ENCODE measurements at regions of chr1 and their contacts with region 1.

Region 1: GRCh38 chr1:153510984-153511410 is 24.8 kb downstream of the S100A6 start:
- DNase-seq: peak; percentile 53 to 89 (median 82)
- ATAC-seq: peak; percentile 90
- H3K4me3 ChIP-seq: no peak overlapping the region
- H3K4me3 Mint-ChIP-seq: no peak overlapping the region
- H3K27ac ChIP-seq: no peak overlapping the region
- H3K27ac Mint-ChIP-seq: no peak overlapping the region
- H3K4me1 ChIP-seq: no peaks in the 10 kb centered on the region
- H3K4me1 Mint-ChIP-seq: no peaks in the 10 kb centered on the region
- H3K27me3 ChIP-seq: no peaks in the 10 kb centered on the region
- H3K27me3 Mint-ChIP-seq: no peaks in the 10 kb centered on the region
- CTCF ChIP-seq: peak; percentile 94

Region 2: GRCh38 chr1:152996633-152997400 is 514.2 kb before region 1 on chr1:
- CTCF ChIA-PET with region 1: no interaction called
- POLR2A ChIA-PET with region 1: no interaction called
- intact Hi-C with region 1: no loop called
- DNase-seq: no peak
- ATAC-seq: no peak
- H3K4me3 ChIP-seq: no peak overlapping the region
- H3K4me3 Mint-ChIP-seq: no peak overlapping the region
- H3K27ac ChIP-seq: no peak overlapping the region
- H3K27ac Mint-ChIP-seq: no peak overlapping the region
- H3K4me1 ChIP-seq: no peaks in the 10 kb centered on the region
- H3K4me1 Mint-ChIP-seq: no peaks in the 10 kb centered on the region
- H3K27me3 ChIP-seq: no peaks in the 10 kb centered on the region
- H3K27me3 Mint-ChIP-seq: peaks cover 39% of the 10 kb centered on the region
- CTCF ChIP-seq: no peak

Region 3: GRCh38 chr1:153494976-153495535 is 15.9 kb before region 1 on chr1:
- CTCF ChIA-PET with region 1: interaction called, 26 read pairs
- POLR2A ChIA-PET with region 1: no interaction called
- intact Hi-C with region 1: no loop called
- DNase-seq: peak; percentile 46 to 81 (median 72)
- ATAC-seq: peak; percentile 68
- H3K4me3 ChIP-seq: no peak overlapping the region
- H3K4me3 Mint-ChIP-seq: no peak overlapping the region
- H3K27ac ChIP-seq: no peak overlapping the region
- H3K27ac Mint-ChIP-seq: no peak overlapping the region
- H3K4me1 ChIP-seq: no peaks in the 10 kb centered on the region
- H3K4me1 Mint-ChIP-seq: no peaks in the 10 kb centered on the region
- H3K27me3 ChIP-seq: peaks cover 4 to 5% of the 10 kb centered on the region in 2 experiments
- H3K27me3 Mint-ChIP-seq: peaks cover 28% of the 10 kb centered on the region
- CTCF ChIP-seq: peak; percentile 91

Region 4: GRCh38 chr1:153545067-153546055 is 34.4 kb after region 1 on chr1 and contains the start of gene S100A4:
- CTCF ChIA-PET with region 1: interaction called, 23 read pairs
- POLR2A ChIA-PET with region 1: no interaction called
- intact Hi-C with region 1: no loop called
- DNase-seq: peak; percentile 47 to 91 (median 83)
- ATAC-seq: peak; percentile 74
- H3K4me3 ChIP-seq: peak within 1 kb of the TSS; percentile 56 to 64
- H3K4me3 Mint-ChIP-seq: peak within 1 kb of the TSS; percentile 87
- H3K27ac ChIP-seq: peak within 1 kb of the TSS; percentile 66 to 69
- H3K27ac Mint-ChIP-seq: peak within 1 kb of the TSS; percentile 91
- H3K4me1 ChIP-seq: peaks cover 65% of the 10 kb centered on the region
- H3K4me1 Mint-ChIP-seq: peaks cover 66% of the 10 kb centered on the region
- H3K27me3 ChIP-seq: no peaks in the 10 kb centered on the region
- H3K27me3 Mint-ChIP-seq: no peaks in the 10 kb centered on the region
- CTCF ChIP-seq: no peak
- total RNA-seq, gene S100A4: 172 to 177 TPM

Region 5: DNA sequence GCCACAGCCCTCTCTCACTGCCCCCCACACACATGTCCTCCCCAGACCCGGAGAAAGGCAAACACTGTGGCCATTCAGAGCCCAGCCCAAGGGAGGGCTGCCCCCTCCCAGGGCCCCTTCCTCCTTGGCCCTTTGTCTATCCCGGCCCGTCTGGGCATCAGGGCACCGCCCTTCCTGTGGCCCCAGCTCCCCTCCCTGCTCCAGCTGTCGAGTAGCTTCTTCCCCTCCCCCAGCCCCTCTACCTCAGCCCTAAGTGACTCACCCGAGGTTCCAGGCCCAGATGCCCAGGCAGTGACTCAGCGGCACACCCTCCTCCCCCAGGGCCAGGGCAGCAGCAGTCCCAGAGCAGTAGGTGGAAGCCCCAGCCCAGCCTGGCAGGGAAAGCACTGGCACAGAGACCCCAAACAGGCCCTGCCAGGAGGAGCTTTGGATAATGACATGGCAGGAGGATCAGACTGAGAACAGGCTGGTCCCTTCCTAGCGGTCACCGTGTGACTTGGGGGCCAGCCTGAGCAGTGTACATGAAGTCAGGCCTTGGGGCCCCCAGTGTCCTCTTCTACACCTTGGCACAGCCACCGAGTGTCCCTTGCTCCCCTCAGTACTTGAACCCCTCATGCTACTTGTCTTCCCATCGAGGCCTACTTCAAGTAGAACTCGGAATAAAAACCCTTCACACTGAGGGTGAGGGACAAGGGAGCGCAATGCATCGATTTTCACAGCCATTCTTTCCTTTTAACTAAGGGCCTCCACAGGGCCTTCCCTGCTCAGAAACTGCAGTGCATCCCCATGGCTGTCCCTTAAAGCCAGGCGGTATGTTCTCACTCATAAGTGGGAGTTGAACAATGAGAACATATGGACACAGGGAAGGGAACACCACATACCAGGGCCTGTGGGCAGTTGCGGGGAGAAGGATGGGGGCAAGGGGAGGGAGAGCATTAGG is 55.7 kb after region 1 on chr1:
- CTCF ChIA-PET with region 1: interaction called, 237 read pairs
- POLR2A ChIA-PET with region 1: no interaction called
- intact Hi-C with region 1: loop called (anchors 1 kb)
- DNase-seq: peak; percentile 38 to 90 (median 80)
- ATAC-seq: peak; percentile 82
- H3K4me3 ChIP-seq: no peak overlapping the region
- H3K4me3 Mint-ChIP-seq: no peak overlapping the region
- H3K27ac ChIP-seq: peak overlapping the region in 1 of 2 experiments; percentile 67
- H3K27ac Mint-ChIP-seq: peak overlapping the region; percentile 69
- H3K4me1 ChIP-seq: peaks cover 17% of the 10 kb centered on the region
- H3K4me1 Mint-ChIP-seq: peaks cover 26% of the 10 kb centered on the region
- H3K27me3 ChIP-seq: no peaks in the 10 kb centered on the region
- H3K27me3 Mint-ChIP-seq: peaks cover 8% of the 10 kb centered on the region
- CTCF ChIP-seq: no peak

Region 6: DNA sequence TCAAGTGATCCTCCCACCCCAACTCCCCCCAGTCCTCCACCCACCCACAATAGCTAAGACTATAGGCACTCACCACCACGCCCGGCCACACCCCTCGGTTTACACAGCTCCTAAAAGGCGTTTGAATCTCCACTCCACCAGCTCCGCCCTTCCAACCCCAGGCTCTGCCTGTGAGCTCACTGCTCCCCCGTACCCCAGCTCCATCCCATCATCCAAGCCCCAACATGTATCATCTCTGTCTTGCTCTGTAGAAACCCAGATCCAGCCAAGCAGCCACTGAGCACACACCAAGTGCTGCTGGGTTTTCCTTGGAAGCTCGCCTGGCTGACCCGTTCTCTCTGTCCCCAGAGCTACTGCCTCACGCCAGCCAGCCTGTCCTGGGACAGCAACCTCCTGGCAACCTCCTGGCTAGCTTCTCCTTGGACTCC is 66.6 kb after region 1 on chr1:
- CTCF ChIA-PET with region 1: interaction called, 237 read pairs
- POLR2A ChIA-PET with region 1: interaction called, 3 read pairs
- intact Hi-C with region 1: no loop called
- DNase-seq: no peak
- ATAC-seq: no peak
- H3K4me3 ChIP-seq: no peak overlapping the region
- H3K4me3 Mint-ChIP-seq: no peak overlapping the region
- H3K27ac ChIP-seq: no peak overlapping the region
- H3K27ac Mint-ChIP-seq: no peak overlapping the region
- H3K4me1 ChIP-seq: no peaks in the 10 kb centered on the region
- H3K4me1 Mint-ChIP-seq: no peaks in the 10 kb centered on the region
- H3K27me3 ChIP-seq: peaks cover 0 to 4% of the 10 kb centered on the region in 2 experiments
- H3K27me3 Mint-ChIP-seq: peaks cover 22% of the 10 kb centered on the region
- CTCF ChIP-seq: no peak

Region 7: DNA sequence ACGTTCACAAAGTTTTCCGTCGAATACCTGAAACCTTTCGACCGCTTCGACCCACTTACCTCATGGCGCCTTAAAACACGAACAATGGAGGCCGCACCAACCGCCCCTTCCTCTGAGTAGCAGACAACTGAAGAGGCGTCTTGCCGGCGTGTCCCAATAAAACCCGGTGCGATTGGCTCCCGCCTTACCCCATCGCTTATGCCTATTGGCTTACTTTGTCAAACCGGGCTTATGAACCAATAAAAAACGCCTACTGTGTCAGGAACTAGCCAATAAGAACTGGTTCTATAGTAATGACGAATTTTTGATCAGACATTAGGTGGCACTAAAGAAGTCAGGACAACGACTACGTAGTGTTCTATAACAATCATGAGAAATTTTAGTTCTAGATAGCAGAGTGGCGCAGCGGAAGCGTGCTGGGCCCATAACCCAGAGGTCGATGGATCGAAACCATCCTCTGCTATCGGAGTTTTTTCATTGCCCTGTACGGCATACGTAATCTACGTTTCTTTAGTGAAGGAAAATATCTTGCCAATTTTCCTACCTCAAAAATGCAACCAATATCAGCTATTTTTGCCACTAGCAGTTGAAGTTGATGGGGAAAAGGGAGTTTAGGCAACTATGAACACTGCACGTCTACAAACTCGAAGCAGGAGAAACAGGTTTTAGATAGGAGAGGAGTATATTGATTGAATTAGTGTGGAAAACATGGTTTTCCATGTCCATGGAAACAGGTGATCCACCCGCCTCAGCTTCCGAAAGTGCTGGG is 160.0 kb after region 1 on chr1 and contains the start of gene ILF2:
- CTCF ChIA-PET with region 1: interaction called, 6 read pairs
- POLR2A ChIA-PET with region 1: no interaction called
- intact Hi-C with region 1: loop called in 1 of 2 experiments (anchors 1 kb)
- DNase-seq: peak; percentile 89 to 99 (median 97)
- ATAC-seq: peak; percentile 87
- H3K4me3 ChIP-seq: peak within 1 kb of the TSS; percentile 76 to 81
- H3K4me3 Mint-ChIP-seq: no peak within 1 kb of the TSS
- H3K27ac ChIP-seq: peak within 1 kb of the TSS; percentile 89 to 94
- H3K27ac Mint-ChIP-seq: peak within 1 kb of the TSS; percentile 67
- H3K4me1 ChIP-seq: peaks cover 22% of the 10 kb centered on the region
- H3K4me1 Mint-ChIP-seq: peaks cover 20% of the 10 kb centered on the region
- H3K27me3 ChIP-seq: no peaks in the 10 kb centered on the region
- H3K27me3 Mint-ChIP-seq: peaks cover under 1% of the 10 kb centered on the region
- CTCF ChIP-seq: no peak
- total RNA-seq, gene ILF2: 150 to 156 TPM